Esophagus muscularis mucosa (tissue), 4 donors: ENCODE measurements at regions of chr15 and their contacts with region 1.

Region 1: DNA sequence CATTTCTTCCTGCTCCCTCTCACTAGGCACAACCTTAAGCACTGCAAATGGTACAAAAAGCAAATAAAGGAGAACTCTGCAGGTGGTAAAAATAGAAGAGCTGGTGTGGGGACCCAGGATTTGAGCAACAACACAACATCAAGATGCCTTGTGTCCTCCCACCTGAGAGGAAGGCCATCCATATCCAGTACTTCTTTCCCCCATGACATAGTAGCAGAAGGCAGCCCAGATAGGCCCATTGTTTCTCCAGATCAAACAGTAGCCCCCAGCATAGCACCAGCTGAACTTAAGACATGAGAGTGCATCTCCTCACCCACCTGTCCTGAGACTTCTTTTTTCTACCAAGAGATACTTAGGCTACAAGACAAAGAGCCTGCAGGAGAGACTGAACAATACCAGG is 180.5 kb downstream of the GOLGA6L6 start:
- DNase-seq: no peak
- H3K4me3 ChIP-seq: no peak overlapping the region
- H3K27ac ChIP-seq: no peak overlapping the region
- H3K4me1 ChIP-seq: no peaks in the 10 kb centered on the region
- H3K27me3 ChIP-seq: peaks cover 0 to 38% (median 0%) of the 10 kb centered on the region in 4 donors
- CTCF ChIP-seq: no peak
- EP300 ChIP-seq: no peak
- POLR2A ChIP-seq: no peak

Region 2: GRCh38 chr15:20305040-20305392 is 56.1 kb before region 1 on chr15:
- intact Hi-C with region 1: loop called (anchors 10 kb)
- DNase-seq: no peak
- H3K4me3 ChIP-seq: no peak overlapping the region
- H3K27ac ChIP-seq: no peak overlapping the region
- H3K4me1 ChIP-seq: no peaks in the 10 kb centered on the region
- H3K27me3 ChIP-seq: no peaks in the 10 kb centered on the region
- CTCF ChIP-seq: no peak
- EP300 ChIP-seq: no peak
- POLR2A ChIP-seq: no peak

Region 3: GRCh38 chr15:20409247-20409646 is 48.2 kb after region 1 on chr15:
- intact Hi-C with region 1: no loop called
- DNase-seq: no peak
- H3K4me3 ChIP-seq: no peak overlapping the region
- H3K27ac ChIP-seq: no peak overlapping the region
- H3K4me1 ChIP-seq: no peaks in the 10 kb centered on the region
- H3K27me3 ChIP-seq: no peaks in the 10 kb centered on the region
- CTCF ChIP-seq: no peak
- EP300 ChIP-seq: no peak
- POLR2A ChIP-seq: no peak

Region 4: GRCh38 chr15:20645956-20646355 is 284.9 kb after region 1 on chr15:
- intact Hi-C with region 1: no loop called
- DNase-seq: no peak
- H3K4me3 ChIP-seq: no peak overlapping the region
- H3K27ac ChIP-seq: no peak overlapping the region
- H3K4me1 ChIP-seq: no peaks in the 10 kb centered on the region
- H3K27me3 ChIP-seq: peaks cover 0 to 13% (median 0%) of the 10 kb centered on the region in 4 donors
- CTCF ChIP-seq: no peak
- EP300 ChIP-seq: no peak
- POLR2A ChIP-seq: no peak